ENCODE measurements at regions of chr9 and their contacts with region 1.

Region 1: GRCh38 chr9:26723486-26723885 is 169.1 kb downstream of the CAAP1 start:
- DNase-seq: peak in 1 of 2 donors; percentile 61
- H3K4me3 ChIP-seq: no peak overlapping the region
- H3K27ac ChIP-seq: no peak overlapping the region
- H3K4me1 ChIP-seq: no peaks in the 10 kb centered on the region
- H3K27me3 ChIP-seq: no peaks in the 10 kb centered on the region
- CTCF ChIP-seq: no peak

Region 2: DNA sequence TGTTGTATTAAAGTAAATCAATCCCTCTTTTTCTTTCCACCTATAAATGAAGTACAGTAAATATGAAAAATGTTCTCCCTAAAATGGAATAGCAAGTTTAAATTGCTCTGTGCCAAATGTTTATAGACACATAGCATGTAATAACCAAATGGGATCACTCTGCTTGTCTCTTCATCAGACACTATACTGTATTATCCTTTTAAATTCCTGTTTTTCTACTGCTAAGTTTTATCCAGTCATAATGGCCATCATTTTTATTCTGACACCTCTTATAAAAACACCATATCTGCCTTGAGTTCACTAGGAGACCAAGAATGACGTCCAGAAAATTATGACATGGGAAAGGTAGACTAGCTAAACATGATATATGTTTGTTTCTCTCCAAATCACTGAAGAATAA is 83.7 kb before region 1 on chr9:
- intact Hi-C with region 1: no loop called
- DNase-seq: no peak
- H3K4me3 ChIP-seq: no peak overlapping the region
- H3K27ac ChIP-seq: no peak overlapping the region
- H3K4me1 ChIP-seq: no peaks in the 10 kb centered on the region
- H3K27me3 ChIP-seq: no peaks in the 10 kb centered on the region
- CTCF ChIP-seq: no peak

Region 3: GRCh38 chr9:26669666-26670352 is 53.7 kb before region 1 on chr9:
- intact Hi-C with region 1: loop called (anchors 10 kb)
- DNase-seq: no peak
- H3K4me3 ChIP-seq: no peak overlapping the region
- H3K27ac ChIP-seq: no peak overlapping the region
- H3K4me1 ChIP-seq: no peaks in the 10 kb centered on the region
- H3K27me3 ChIP-seq: no peaks in the 10 kb centered on the region
- CTCF ChIP-seq: no peak

Region 4: GRCh38 chr9:26809795-26810194 is 86.3 kb after region 1 on chr9:
- intact Hi-C with region 1: no loop called
- DNase-seq: no peak
- H3K4me3 ChIP-seq: no peak overlapping the region
- H3K27ac ChIP-seq: no peak overlapping the region
- H3K4me1 ChIP-seq: no peaks in the 10 kb centered on the region
- H3K27me3 ChIP-seq: no peaks in the 10 kb centered on the region
- CTCF ChIP-seq: no peak